Left ventricle myocardium superior (tissue), 1 donor: ENCODE measurements at regions of chr2 and their contacts with region 1.

Region 1: DNA sequence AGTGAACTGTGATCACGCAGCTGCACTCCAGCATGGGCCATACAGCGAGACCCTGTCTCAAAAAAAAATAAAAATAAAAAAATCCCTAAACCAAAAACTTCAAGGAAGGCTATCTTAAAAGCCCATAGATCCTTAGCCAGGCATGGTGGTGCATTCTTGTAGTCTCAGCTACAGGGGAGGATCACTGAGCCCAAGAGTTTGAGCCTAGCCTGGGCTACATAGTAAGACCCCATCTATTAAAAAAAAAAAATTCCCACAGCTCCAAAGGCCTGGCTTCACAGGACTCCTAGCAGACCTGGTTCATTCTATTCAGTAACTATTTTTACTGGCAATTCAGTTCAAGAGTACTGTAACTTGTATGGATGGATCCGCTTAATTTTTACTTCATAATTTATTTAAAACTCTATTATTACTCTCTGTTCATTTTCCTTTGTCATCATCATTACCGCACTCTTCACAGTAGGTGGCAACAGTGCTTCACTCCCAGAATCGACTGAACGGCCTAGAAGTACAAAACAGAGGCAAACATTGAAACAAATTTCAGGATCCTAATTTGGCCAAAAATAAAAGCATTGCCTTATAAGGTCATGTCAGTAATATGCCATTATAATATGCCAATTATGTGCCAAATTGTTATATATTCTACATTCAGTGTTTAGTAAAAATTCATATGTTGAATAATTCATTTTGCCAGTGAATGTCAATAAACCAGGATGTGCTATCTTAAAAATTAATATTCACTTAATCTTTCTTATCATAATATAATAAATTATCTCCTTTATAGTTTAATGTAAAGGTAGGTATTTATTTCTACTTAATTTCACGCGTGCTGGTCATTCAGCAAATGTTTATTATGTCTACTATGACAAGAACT is 14.3 kb upstream of the STAM2 start:
- DNase-seq: no peak
- ATAC-seq: peak; percentile 77

Region 2: DNA sequence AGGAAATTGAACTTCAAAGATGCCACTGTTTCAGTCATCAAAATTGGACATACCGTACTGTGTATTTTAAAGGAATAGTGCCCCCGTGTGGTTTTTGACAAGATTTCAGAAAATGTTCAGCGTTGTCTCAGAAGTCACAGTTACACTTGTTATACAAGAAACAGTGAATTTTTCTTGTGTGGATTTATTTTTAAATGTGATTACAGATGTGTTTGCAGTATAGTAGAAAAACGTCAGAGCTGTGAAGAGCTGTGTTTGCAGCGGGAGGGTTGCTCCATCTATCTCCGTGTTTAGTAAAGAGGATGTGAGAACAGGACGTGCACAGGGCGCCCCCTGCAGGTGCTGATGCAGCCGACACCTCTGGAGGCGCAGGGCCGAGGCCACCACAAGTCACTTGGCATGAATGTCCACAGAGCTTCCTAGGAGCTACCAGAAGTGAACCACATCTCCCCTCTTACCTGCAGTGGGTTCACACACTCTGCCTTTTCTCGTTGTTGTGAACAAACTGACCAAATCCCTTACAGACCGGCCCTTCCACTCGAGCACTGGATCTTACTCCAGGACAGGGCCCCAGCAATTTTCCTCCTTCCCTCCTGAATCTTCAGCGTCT is 164.1 kb before region 1 on chr2:
- intact Hi-C with region 1: no loop called
- DNase-seq: peak; percentile 92
- ATAC-seq: peak; percentile 98

Region 3: GRCh38 chr2:152319831-152320570 is 130.1 kb after region 1 on chr2:
- intact Hi-C with region 1: no loop called
- DNase-seq: no peak
- ATAC-seq: no peak

Region 4: GRCh38 chr2:152627351-152627957 is 437.6 kb after region 1 on chr2:
- intact Hi-C with region 1: loop called (anchors 5 kb)
- DNase-seq: no peak
- ATAC-seq: peak; percentile 67

Region 5: GRCh38 chr2:152635635-152636298 is 445.9 kb after region 1 on chr2:
- intact Hi-C with region 1: loop called (anchors 5 kb)
- DNase-seq: no peak
- ATAC-seq: peak; percentile 65

Region 6: GRCh38 chr2:152826581-152827279 is 636.9 kb after region 1 on chr2:
- intact Hi-C with region 1: no loop called
- DNase-seq: no peak
- ATAC-seq: no peak